GM12878 (cell line): ENCODE measurements at regions of chr2 and their contacts with region 1.

Region 1: DNA sequence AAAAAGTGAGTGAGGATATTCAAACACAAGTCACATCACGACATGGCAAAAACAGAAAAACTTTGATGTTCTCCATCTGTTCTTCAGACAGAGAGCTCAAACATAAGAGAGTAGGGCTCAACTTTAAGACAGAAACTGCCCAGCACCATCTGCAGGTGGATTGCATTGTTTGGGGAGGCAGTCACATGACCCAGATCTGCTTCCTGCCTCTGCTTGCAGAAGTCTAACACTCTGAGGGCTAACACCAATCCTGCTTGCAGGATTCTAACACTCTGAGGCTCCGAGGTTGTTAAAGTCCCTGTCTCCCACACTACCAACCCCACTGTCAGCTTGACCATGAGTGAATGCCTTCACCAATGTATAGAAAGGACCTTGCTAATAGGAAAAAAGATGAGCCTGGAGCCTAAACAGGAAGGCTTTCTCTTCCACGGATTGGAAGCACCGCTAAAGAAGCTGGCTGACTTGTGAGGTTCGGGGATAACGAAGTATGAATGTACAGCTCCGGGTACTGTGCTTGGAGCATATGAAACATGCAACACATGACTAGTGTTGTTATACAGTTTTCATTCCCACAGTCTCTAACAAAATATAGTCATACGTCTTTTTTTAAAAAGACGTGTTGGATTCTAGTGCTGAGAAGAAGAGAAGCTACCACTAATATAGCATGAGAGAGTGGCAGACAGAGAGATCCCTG is 176.6 kb upstream of the CREB1 start:
- DNase-seq: no peak
- ATAC-seq: peak; percentile 90
- H3K4me3 ChIP-seq: no peak overlapping the region
- H3K27ac ChIP-seq: no peak overlapping the region
- H3K4me1 ChIP-seq: peaks cover 7% of the 10 kb centered on the region; the same call in 1 of the 2 replicates
- H3K27me3 ChIP-seq: no peaks in the 10 kb centered on the region
- CTCF ChIP-seq: peak in 1 of 3 experiments; percentile 45; a peak in 1 of 6 replicates
- EP300 ChIP-seq: no peak
- POLR2A ChIP-seq: no peak
- RAD21 ChIP-seq: peak; percentile 55

Region 2: GRCh38 chr2:207283356-207283755 is 69.8 kb before region 1 on chr2:
- CTCF ChIA-PET with region 1: interaction called, 5 read pairs
- POLR2A ChIA-PET with region 1: interaction called, 3 read pairs
- RAD21 ChIA-PET with region 1: no interaction called
- SMC1A ChIA-PET with region 1: interaction called, 12 read pairs
- in situ Hi-C with region 1: no loop called
- intact Hi-C with region 1: no loop called
- DNase-seq: no peak
- ATAC-seq: peak; percentile 57
- H3K4me3 ChIP-seq: no peak overlapping the region
- H3K27ac ChIP-seq: peak overlapping the region; percentile 36; the same call in 1 of the 2 replicates
- H3K4me1 ChIP-seq: peaks cover 27% of the 10 kb centered on the region
- H3K27me3 ChIP-seq: no peaks in the 10 kb centered on the region
- CTCF ChIP-seq: peak in 1 of 3 experiments; percentile 2; a peak in 1 of 6 replicates
- EP300 ChIP-seq: no peak
- POLR2A ChIP-seq: no peak
- RAD21 ChIP-seq: 0 out of 2 replicates have a peak, but pooled peaks have one; percentile 25

Region 3: GRCh38 chr2:207341804-207342203 is 11.3 kb before region 1 on chr2:
- CTCF ChIA-PET with region 1: interaction called, 6 read pairs
- POLR2A ChIA-PET with region 1: no interaction called
- RAD21 ChIA-PET with region 1: interaction called, 7 read pairs
- SMC1A ChIA-PET with region 1: interaction called, 22 read pairs
- in situ Hi-C with region 1: no loop called
- intact Hi-C with region 1: no loop called
- DNase-seq: no peak
- ATAC-seq: no peak
- H3K4me3 ChIP-seq: no peak overlapping the region
- H3K27ac ChIP-seq: no peak overlapping the region
- H3K4me1 ChIP-seq: peaks cover 6% of the 10 kb centered on the region
- H3K27me3 ChIP-seq: no peaks in the 10 kb centered on the region
- CTCF ChIP-seq: peak in 2 of 3 experiments; percentile 14 to 43; a peak in 2 of 6 replicates
- EP300 ChIP-seq: no peak
- POLR2A ChIP-seq: no peak
- RAD21 ChIP-seq: peak; percentile 60

Region 4: DNA sequence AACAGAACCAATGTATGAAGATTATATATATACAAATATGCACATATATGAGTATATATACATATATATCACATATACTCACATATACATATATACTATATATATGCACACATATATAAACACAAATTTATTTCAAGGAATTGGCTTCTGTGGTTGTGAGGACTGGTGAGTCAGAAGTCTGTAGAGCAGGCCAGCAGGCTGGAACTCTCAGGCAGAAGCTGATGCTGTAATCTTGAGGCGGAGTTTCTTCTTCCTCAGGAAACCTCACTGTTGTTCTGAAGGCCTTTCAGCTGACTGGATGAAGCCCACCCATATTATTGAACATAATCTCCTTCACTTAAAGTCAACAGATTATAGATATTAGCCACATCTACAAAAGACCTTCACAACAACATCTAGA is 32.8 kb after region 1 on chr2:
- CTCF ChIA-PET with region 1: no interaction called
- POLR2A ChIA-PET with region 1: no interaction called
- RAD21 ChIA-PET with region 1: no interaction called
- SMC1A ChIA-PET with region 1: no interaction called
- in situ Hi-C with region 1: no loop called
- intact Hi-C with region 1: no loop called
- DNase-seq: no peak
- ATAC-seq: no peak
- H3K4me3 ChIP-seq: no peak overlapping the region
- H3K27ac ChIP-seq: no peak overlapping the region
- H3K4me1 ChIP-seq: no peaks in the 10 kb centered on the region
- H3K27me3 ChIP-seq: no peaks in the 10 kb centered on the region; a peak in 1 of 4 replicates
- CTCF ChIP-seq: no peak
- EP300 ChIP-seq: no peak
- POLR2A ChIP-seq: no peak
- RAD21 ChIP-seq: no peak